ENCODE measurements at regions of chr17 and their contacts with region 1.

Region 1: DNA sequence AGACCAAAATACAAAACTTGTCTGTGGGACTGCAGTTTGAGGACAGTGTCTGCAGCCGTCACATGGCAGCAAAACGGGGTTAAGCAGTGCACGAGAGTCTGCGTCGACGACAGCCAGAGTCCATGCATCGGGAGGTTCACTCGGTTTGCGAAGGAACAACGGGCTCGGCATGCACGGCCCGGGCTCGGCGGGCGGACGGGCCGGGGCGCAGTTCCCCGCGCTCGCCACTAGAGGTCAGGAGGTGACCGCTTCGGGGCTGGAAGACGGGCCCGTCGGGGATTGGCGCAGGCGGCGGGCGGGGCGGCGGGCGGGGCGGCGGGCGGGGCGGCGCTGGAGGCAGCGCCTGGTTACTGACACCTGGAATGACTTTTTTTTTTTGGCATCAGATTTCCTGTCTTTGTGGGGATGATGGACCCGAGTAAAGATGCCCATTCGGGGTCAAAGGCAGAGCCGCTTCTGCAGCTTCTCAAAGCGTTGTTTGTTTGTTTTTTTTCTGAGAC is 6.5 kb downstream of the SCGB1C2 start:
- DNase-seq: peak; percentile 61
- H3K4me3 ChIP-seq: no peak overlapping the region
- H3K27ac ChIP-seq: no peak overlapping the region
- H3K4me1 ChIP-seq: no peaks in the 10 kb centered on the region
- H3K27me3 ChIP-seq: no peaks in the 10 kb centered on the region
- CTCF ChIP-seq: peak; percentile 26 to 66

Region 2: DNA sequence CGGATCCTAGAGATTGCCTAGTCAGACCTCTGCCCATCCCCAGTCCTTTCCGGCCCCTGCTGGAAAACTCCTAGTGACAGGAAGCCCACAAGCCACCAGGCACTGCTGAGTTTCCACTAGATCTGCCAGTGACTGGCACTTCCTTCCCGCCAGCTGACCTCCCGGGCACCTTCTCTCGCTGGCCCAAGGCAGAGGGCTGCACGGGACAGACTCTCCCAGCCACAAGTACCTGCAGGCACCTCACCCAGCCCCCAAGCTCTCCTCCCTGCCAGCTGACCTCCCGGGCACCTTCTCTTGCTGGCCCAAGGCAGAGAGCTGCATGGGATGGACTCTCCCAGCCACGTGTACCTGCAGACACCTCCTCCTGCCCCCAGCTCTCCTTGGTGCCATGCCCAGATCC is 103.9 kb after region 1 on chr17:
- CTCF ChIA-PET with region 1: no interaction called
- dilution Hi-C with region 1: no loop called
- in situ Hi-C with region 1: no loop called
- intact Hi-C with region 1: no loop called
- DNase-seq: no peak
- H3K4me3 ChIP-seq: no peak overlapping the region
- H3K27ac ChIP-seq: no peak overlapping the region
- H3K4me1 ChIP-seq: no peaks in the 10 kb centered on the region
- H3K27me3 ChIP-seq: no peaks in the 10 kb centered on the region
- CTCF ChIP-seq: no peak

Region 3: DNA sequence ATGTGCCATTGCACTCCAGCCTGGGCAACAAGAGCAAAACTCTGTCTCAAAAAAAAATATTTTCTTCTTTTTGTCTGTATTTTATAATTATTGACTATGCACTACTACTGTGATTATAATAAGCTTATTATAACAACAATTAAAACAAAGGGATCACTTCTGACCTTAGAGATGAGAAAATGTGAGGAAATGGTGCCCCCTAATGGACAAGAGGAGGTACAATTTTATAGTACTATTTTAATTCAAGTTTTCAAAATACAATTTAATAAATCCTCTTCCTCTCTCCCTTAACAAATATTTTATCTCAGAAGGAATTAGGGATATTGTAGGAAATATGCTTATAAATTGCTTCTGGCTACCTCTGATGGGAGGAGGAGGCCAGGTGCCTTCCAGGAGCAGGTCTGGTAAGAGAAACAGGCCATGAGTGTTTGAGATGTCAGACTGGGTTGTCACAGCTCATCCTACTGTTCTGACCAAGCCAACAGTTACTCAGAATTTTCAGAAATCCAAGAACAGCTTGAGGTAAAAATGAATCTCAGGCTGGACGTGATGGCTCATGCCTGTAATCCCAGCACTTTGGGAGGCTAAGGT is 556.8 kb after region 1 on chr17:
- CTCF ChIA-PET with region 1: no interaction called
- dilution Hi-C with region 1: no loop called
- in situ Hi-C with region 1: no loop called
- intact Hi-C with region 1: loop called (anchors 5 kb)
- DNase-seq: no peak
- H3K4me3 ChIP-seq: no peak overlapping the region
- H3K27ac ChIP-seq: no peak overlapping the region
- H3K4me1 ChIP-seq: no peaks in the 10 kb centered on the region
- H3K27me3 ChIP-seq: no peaks in the 10 kb centered on the region
- CTCF ChIP-seq: peak; percentile 46 to 56

Measured in mammary epithelial cell (primary cell).